GM12878 (cell line): ENCODE measurements at regions of chr16 and their contacts with region 1.

Region 1: DNA sequence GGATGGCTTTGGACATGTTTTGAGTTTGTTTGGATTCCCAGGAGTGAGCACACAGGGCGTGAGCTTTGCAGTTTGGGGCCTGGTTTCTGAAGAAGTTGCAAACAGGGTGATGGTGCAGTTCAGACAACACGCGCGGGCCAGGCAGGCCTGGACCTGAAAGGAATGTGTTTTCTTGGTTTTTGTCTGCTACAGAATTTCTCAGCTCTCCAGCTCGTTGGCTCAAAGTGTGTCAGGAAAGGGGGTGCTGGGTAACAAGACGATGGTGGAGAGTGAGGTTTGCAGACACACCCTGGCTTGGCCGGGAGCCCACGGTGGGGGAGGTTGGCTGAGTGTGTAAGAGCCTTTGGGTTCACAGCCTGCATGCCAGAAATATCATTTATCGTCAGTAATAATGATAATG is 82.3 kb downstream of the CMIP start:
- DNase-seq: no peak
- ATAC-seq: no peak
- H3K4me3 ChIP-seq: no peak overlapping the region
- H3K27ac ChIP-seq: no peak overlapping the region
- H3K4me1 ChIP-seq: peaks cover 3% of the 10 kb centered on the region; the same call in 1 of the 2 replicates
- H3K27me3 ChIP-seq: no peaks in the 10 kb centered on the region
- CTCF ChIP-seq: no peak
- EP300 ChIP-seq: no peak
- POLR2A ChIP-seq: no peak
- RAD21 ChIP-seq: no peak

Region 2: GRCh38 chr16:81502396-81503070 is 24.4 kb before region 1 on chr16:
- CTCF ChIA-PET with region 1: no interaction called
- POLR2A ChIA-PET with region 1: no interaction called
- RAD21 ChIA-PET with region 1: no interaction called
- SMC1A ChIA-PET with region 1: no interaction called
- in situ Hi-C with region 1: no loop called
- intact Hi-C with region 1: no loop called
- DNase-seq: no peak
- ATAC-seq: no peak
- H3K4me3 ChIP-seq: no peak overlapping the region
- H3K27ac ChIP-seq: no peak overlapping the region
- H3K4me1 ChIP-seq: peaks cover 41% of the 10 kb centered on the region
- H3K27me3 ChIP-seq: no peaks in the 10 kb centered on the region
- CTCF ChIP-seq: no peak
- EP300 ChIP-seq: no peak
- POLR2A ChIP-seq: no peak
- RAD21 ChIP-seq: no peak

Region 3: GRCh38 chr16:81513204-81514040 is 13.5 kb before region 1 on chr16:
- CTCF ChIA-PET with region 1: interaction called, 10 read pairs
- POLR2A ChIA-PET with region 1: interaction called, 3 read pairs
- RAD21 ChIA-PET with region 1: no interaction called
- SMC1A ChIA-PET with region 1: interaction called, 3 read pairs
- in situ Hi-C with region 1: no loop called
- intact Hi-C with region 1: no loop called
- DNase-seq: no peak
- ATAC-seq: peak; percentile 63
- H3K4me3 ChIP-seq: peak overlapping the region; percentile 29; the same call in 1 of the 2 replicates
- H3K27ac ChIP-seq: peak overlapping the region; percentile 35
- H3K4me1 ChIP-seq: peaks cover 20% of the 10 kb centered on the region
- H3K27me3 ChIP-seq: no peaks in the 10 kb centered on the region
- CTCF ChIP-seq: no peak
- EP300 ChIP-seq: no peak
- POLR2A ChIP-seq: no peak
- RAD21 ChIP-seq: no peak

Region 4: GRCh38 chr16:81553814-81554675 is 27.1 kb after region 1 on chr16:
- CTCF ChIA-PET with region 1: no interaction called
- POLR2A ChIA-PET with region 1: no interaction called
- RAD21 ChIA-PET with region 1: no interaction called
- SMC1A ChIA-PET with region 1: no interaction called
- in situ Hi-C with region 1: no loop called
- intact Hi-C with region 1: no loop called
- DNase-seq: no peak
- ATAC-seq: 0 out of 3 replicates have a peak, but pooled peaks have one; percentile 21
- H3K4me3 ChIP-seq: no peak overlapping the region
- H3K27ac ChIP-seq: no peak overlapping the region
- H3K4me1 ChIP-seq: peaks cover 12% of the 10 kb centered on the region
- H3K27me3 ChIP-seq: no peaks in the 10 kb centered on the region
- CTCF ChIP-seq: no peak
- EP300 ChIP-seq: no peak
- POLR2A ChIP-seq: no peak
- RAD21 ChIP-seq: no peak

Region 5: DNA sequence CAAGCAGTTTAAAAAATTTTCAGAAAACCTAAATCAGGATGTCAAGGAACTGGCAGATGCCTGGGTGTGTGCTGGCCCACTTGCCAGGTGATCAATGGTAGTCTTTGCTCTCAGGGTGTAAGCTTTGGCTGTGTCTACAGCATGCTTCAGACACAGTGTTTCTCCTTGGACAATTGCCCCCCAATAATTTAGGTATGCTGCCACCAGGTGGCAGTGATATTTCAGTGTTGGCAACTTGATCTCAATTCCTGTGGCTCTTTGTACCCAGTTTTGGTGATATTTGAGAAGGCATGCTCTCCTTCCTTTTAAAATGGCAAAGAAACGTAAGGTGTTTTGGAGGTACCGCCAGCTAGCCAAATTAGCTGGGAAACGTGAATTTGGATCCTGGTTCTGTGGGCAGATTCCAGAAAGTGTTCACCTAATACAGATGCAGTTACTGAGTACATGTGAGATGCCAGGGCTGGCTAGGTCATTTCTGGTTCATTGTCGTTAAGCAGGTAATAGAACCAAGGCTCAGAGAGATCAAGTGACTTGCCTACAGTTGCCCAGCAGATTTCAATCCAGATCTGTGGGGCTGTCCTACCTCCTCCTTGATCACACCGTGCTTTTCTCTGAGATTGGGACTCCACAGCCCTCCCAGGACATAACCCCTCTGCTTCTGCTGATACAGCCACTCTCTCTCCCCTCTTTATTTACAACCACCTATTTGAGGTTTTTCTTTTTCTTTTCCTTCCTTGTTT is 96.6 kb after region 1 on chr16:
- CTCF ChIA-PET with region 1: no interaction called
- POLR2A ChIA-PET with region 1: no interaction called
- RAD21 ChIA-PET with region 1: no interaction called
- SMC1A ChIA-PET with region 1: no interaction called
- in situ Hi-C with region 1: no loop called
- intact Hi-C with region 1: no loop called
- DNase-seq: peak; percentile 37
- ATAC-seq: peak; percentile 76
- H3K4me3 ChIP-seq: no peak overlapping the region
- H3K27ac ChIP-seq: no peak overlapping the region
- H3K4me1 ChIP-seq: peaks cover 10% of the 10 kb centered on the region
- H3K27me3 ChIP-seq: no peaks in the 10 kb centered on the region
- CTCF ChIP-seq: peak; percentile 62 to 84 (median 68); a peak in 5 of 6 replicates
- EP300 ChIP-seq: no peak
- POLR2A ChIP-seq: no peak
- RAD21 ChIP-seq: peak; percentile 87